Naive thymus-derived CD4-positive, alpha-beta T cell (primary cell): ENCODE measurements at regions of chr4 and their contacts with region 1.

Region 1: DNA sequence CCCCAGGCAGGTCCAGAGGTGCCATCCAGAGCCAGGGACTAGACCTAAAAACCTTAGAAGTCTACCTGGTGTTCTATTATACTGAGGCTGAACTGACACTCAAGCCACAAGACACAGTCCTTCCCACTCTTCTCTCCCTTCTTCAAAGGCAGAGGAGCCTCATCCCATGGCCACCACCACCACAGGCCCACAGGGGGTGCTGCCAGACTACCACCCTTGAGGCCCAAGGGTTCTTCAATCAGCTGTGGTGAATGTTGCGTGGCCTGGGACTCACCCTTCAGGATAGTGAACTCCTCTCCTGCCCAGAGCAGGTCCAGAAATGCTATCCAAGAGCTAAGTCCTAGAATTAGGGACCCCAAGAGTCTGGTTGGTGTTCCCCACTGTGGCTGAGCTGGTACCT is 17.5 kb upstream of the RFC1 start:
- DNase-seq: no peak
- ATAC-seq: no peak
- H3K4me3 ChIP-seq: no peak overlapping the region
- H3K4me3 Mint-ChIP-seq: no peak overlapping the region
- H3K27ac ChIP-seq: no peak overlapping the region
- H3K27ac Mint-ChIP-seq: no peak overlapping the region
- H3K4me1 ChIP-seq: no peaks in the 10 kb centered on the region
- H3K4me1 Mint-ChIP-seq: no peaks in the 10 kb centered on the region
- H3K27me3 ChIP-seq: no peaks in the 10 kb centered on the region
- H3K27me3 Mint-ChIP-seq: peaks cover 0 to 27% (median 7%) of the 10 kb centered on the region in 5 donors

Region 2: DNA sequence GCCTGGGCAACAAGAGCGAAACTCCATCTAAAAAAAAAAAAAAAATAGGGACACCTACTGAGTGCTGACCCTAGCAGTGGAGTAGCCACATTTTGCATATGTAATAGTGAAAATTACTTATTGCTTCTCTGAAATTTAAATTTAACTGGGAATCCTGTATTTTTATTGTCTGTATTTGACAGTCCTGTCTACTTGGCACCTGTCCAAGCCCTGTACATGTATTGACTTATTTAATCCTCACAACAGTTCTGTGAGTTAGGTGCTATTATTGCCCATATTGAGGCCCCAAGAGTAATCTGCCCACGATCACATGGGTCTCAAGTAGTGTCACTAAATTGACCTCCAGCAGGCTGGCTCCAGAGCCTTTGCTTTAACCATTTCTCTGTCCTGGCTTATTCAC is 119.8 kb before region 1 on chr4:
- CTCF ChIA-PET with region 1: no interaction called
- POLR2A ChIA-PET with region 1: no interaction called
- intact Hi-C with region 1: loop called in 1 of 2 experiments (anchors 5 kb)
- DNase-seq: no peak
- ATAC-seq: no peak
- H3K4me3 ChIP-seq: no peak overlapping the region
- H3K4me3 Mint-ChIP-seq: no peak overlapping the region
- H3K27ac ChIP-seq: no peak overlapping the region
- H3K27ac Mint-ChIP-seq: no peak overlapping the region
- H3K4me1 ChIP-seq: no peaks in the 10 kb centered on the region
- H3K4me1 Mint-ChIP-seq: peaks cover 0 to 1% (median 0%) of the 10 kb centered on the region in 7 donors
- H3K27me3 ChIP-seq: no peaks in the 10 kb centered on the region
- H3K27me3 Mint-ChIP-seq: no peaks in the 10 kb centered on the region

Region 3: GRCh38 chr4:39977489-39978377 is 594.0 kb after region 1 on chr4 and contains the start of gene PDS5A:
- CTCF ChIA-PET with region 1: no interaction called
- POLR2A ChIA-PET with region 1: no interaction called
- intact Hi-C with region 1: no loop called
- DNase-seq: peak; percentile 83 to 95 (median 91)
- ATAC-seq: peak; percentile 94
- H3K4me3 ChIP-seq: peak within 1 kb of the TSS; percentile 78
- H3K4me3 Mint-ChIP-seq: peak within 1 kb of the TSS; percentile 87 to 99 (median 91)
- H3K27ac ChIP-seq: peak within 1 kb of the TSS; percentile 89
- H3K27ac Mint-ChIP-seq: peak within 1 kb of the TSS; percentile 91 to 98 (median 96)
- H3K4me1 ChIP-seq: peaks cover 3 to 18% of the 10 kb centered on the region in 2 donors
- H3K4me1 Mint-ChIP-seq: peaks cover 28 to 43% (median 31%) of the 10 kb centered on the region in 7 donors
- H3K27me3 ChIP-seq: no peaks in the 10 kb centered on the region
- H3K27me3 Mint-ChIP-seq: no peaks in the 10 kb centered on the region
- total RNA-seq, gene PDS5A: 92.7 to 102 (median 98.5) TPM